K562 (cell line): ENCODE measurements at regions of chr5 and their contacts with region 1.

Region 1: GRCh38 chr5:54443270-54443669 is 12.2 kb upstream of the HSPB3 start:
- DNase-seq: peak; percentile 22 to 47 (median 39)
- ATAC-seq: peak; percentile 67
- H3K4me3 ChIP-seq: no peak overlapping the region
- H3K27ac ChIP-seq: no peak overlapping the region
- H3K4me1 ChIP-seq: peaks cover 0 to 15% of the 10 kb centered on the region in 2 experiments; a peak in 3 of 5 replicates
- H3K27me3 ChIP-seq: no peaks in the 10 kb centered on the region
- CTCF ChIP-seq: peak; percentile 38 to 54 (median 41); a peak in 4 of 6 replicates
- EP300 ChIP-seq: no peak
- POLR2A ChIP-seq: no peak
- RAD21 ChIP-seq: peak in 1 of 2 experiments; percentile 51; a peak in 2 of 4 replicates

Region 2: DNA sequence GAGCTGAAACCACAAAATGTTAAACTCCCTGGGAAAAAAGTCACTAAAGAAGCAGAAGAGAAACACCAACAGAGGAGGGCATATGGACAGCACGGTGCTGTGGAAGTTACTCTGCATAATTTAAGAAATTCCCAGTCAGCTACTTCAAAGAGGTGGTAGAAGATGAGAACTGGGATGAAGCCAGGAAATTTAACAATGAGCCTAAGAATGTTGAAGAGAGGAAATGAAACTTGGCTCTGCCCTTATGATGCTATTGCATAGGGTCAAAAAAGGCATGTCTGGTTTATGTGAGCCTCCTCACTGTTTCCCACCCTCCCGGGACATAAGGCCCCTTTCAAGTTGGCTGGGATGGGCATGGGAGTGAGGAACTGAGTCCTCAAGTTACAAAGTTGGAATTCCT is 48.9 kb after region 1 on chr5:
- CTCF ChIA-PET with region 1: interaction called, 4 read pairs
- POLR2A ChIA-PET with region 1: no interaction called
- in situ Hi-C with region 1: no loop called
- intact Hi-C with region 1: loop called (anchors 1 kb)
- DNase-seq: no peak
- ATAC-seq: no peak
- H3K4me3 ChIP-seq: no peak overlapping the region
- H3K27ac ChIP-seq: no peak overlapping the region
- H3K4me1 ChIP-seq: 0 out of 5 replicates have a peak, but pooled peaks cover 0 to 2% of the 10 kb centered on the region in 2 experiments
- H3K27me3 ChIP-seq: no peaks in the 10 kb centered on the region
- CTCF ChIP-seq: no peak
- EP300 ChIP-seq: no peak
- POLR2A ChIP-seq: no peak
- RAD21 ChIP-seq: no peak